Caco-2 (cell line): ENCODE measurements at regions of chr11 and their contacts with region 1.

Region 1: DNA sequence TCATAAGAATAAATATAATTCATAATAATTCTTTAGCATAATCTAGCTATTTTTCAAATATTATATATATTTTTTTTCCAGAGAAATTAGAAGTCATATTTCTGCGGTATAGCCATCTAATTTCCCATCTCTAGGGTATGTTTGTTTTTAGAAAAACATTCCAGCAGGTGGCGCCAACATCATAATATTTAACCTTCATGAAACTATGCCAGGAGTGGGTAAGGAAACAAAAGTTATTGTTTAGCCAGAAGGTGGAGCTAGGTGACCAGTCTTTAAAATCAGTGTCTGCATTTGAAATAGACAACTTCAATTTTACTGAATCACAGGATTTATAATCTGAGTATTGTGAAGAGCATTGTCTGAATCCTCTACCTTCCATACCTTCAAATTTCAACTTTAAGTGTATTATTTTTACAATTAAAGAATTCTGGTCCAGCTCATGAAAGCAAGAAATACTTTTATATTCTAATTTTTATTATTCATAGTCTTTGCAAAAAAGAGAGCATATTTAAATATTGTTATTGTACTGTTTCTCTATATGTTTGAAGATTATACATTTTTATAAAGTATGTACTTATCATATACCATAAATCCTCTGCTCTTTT is 15.7 kb upstream of the CCDC179 start:
- DNase-seq: peak; percentile 60 to 75
- H3K4me3 ChIP-seq: no peak overlapping the region
- H3K4me3 Mint-ChIP-seq: no peak overlapping the region
- H3K27ac Mint-ChIP-seq: no peak overlapping the region
- H3K4me1 ChIP-seq: no peaks in the 10 kb centered on the region
- H3K4me1 Mint-ChIP-seq: peaks cover 6% of the 10 kb centered on the region
- H3K27me3 ChIP-seq: no peaks in the 10 kb centered on the region
- H3K27me3 Mint-ChIP-seq: no peaks in the 10 kb centered on the region
- CTCF ChIP-seq: peak; percentile 62 to 83

Region 2: DNA sequence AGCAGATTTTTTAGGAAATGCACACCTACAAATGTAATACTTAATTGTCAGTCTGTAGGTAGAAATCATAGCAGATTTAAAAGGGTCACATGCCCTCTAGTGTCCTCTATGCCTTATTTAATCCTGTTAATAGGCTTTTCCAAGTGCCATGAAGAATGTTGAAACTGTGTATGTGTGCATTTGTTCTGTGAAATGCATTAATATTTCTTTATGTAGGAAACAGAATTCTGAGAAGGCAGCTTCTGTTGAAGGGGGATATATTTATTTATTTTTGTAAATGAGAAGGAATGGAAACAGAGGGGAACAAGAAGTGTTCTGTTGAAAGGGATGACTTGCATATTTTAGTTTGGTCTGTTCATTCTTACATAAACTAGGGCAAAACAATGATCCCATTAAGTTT is 97.3 kb before region 1 on chr11:
- CTCF ChIA-PET with region 1: no interaction called
- POLR2A ChIA-PET with region 1: no interaction called
- intact Hi-C with region 1: no loop called
- DNase-seq: no peak
- H3K4me3 ChIP-seq: no peak overlapping the region
- H3K4me3 Mint-ChIP-seq: no peak overlapping the region
- H3K27ac Mint-ChIP-seq: no peak overlapping the region
- H3K4me1 ChIP-seq: no peaks in the 10 kb centered on the region
- H3K4me1 Mint-ChIP-seq: no peaks in the 10 kb centered on the region
- H3K27me3 ChIP-seq: no peaks in the 10 kb centered on the region
- H3K27me3 Mint-ChIP-seq: peaks cover 5% of the 10 kb centered on the region
- CTCF ChIP-seq: no peak

Region 3: DNA sequence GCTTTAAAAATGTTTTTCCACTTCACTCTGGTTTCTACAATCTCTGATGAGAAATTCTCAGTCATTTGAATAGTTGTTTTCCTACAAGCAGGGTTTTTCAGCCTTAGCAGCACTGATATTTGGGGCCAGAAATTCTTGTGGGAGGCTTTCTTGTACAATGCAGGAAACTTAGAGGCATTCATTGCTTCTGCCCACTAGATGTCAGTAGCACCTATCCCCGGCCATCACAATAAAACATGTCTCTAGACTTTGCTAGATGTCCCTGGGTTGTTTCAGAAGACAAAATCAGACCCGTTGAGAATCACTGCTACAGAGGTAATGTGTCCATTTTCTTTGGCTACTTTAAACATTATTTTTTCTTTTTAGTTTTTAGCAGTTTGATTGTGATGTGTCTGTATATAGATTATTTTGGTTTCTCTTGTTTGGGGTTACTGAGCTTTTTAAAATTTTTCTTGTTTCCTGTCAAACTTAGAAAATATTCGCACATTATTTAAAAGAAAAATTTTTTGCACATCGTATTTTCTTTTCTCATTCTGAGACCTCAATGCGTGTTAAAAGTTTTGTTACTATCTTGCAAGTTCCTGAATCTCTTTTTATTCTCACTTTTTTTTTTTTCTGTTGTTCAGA is 45.1 kb after region 1 on chr11:
- CTCF ChIA-PET with region 1: no interaction called
- POLR2A ChIA-PET with region 1: no interaction called
- intact Hi-C with region 1: loop called (anchors 1 kb)
- DNase-seq: peak; percentile 49 to 50
- H3K4me3 ChIP-seq: no peak overlapping the region
- H3K4me3 Mint-ChIP-seq: no peak overlapping the region
- H3K27ac Mint-ChIP-seq: no peak overlapping the region
- H3K4me1 ChIP-seq: peaks cover 20% of the 10 kb centered on the region
- H3K4me1 Mint-ChIP-seq: peaks cover 17% of the 10 kb centered on the region
- H3K27me3 ChIP-seq: no peaks in the 10 kb centered on the region
- H3K27me3 Mint-ChIP-seq: no peaks in the 10 kb centered on the region
- CTCF ChIP-seq: peak; percentile 56 to 85

Region 4: DNA sequence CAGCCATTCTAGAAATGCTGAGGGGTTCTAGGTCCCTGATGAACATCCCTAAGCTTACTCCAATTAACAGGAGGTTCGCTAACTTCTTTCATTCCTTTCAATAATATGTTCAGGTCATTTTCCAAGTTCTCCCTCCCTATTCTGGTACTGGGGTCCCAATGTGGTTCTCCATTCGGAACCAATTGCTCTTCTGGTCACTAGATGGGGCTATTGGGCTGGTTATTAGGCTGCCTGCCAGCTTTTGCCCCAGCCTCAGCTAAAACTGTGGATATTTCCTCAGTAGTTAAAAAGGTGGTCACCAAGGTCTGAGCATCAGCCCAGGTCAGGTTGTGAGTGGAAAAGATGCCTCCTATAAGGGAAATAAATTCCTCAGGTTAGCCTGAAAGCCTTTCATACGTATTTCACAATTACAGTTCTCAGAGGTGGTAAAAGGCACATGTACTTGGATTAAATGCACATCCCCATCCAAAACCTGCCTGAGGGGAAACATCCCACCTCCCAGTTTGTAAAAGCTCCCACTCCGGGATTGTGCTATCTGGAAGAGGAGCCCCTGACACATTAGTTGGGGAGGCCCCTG is 145.4 kb after region 1 on chr11:
- CTCF ChIA-PET with region 1: interaction called, 4 read pairs
- POLR2A ChIA-PET with region 1: no interaction called
- intact Hi-C with region 1: loop called (anchors 1 kb)
- DNase-seq: peak in 1 of 2 experiments; percentile 42
- H3K4me3 ChIP-seq: no peak overlapping the region
- H3K4me3 Mint-ChIP-seq: no peak overlapping the region
- H3K27ac Mint-ChIP-seq: no peak overlapping the region
- H3K4me1 ChIP-seq: no peaks in the 10 kb centered on the region
- H3K4me1 Mint-ChIP-seq: no peaks in the 10 kb centered on the region
- H3K27me3 ChIP-seq: no peaks in the 10 kb centered on the region
- H3K27me3 Mint-ChIP-seq: no peaks in the 10 kb centered on the region
- CTCF ChIP-seq: peak; percentile 74 to 85

Region 5: GRCh38 chr11:23087407-23087806 is 211.4 kb after region 1 on chr11:
- CTCF ChIA-PET with region 1: no interaction called
- POLR2A ChIA-PET with region 1: no interaction called
- intact Hi-C with region 1: no loop called
- DNase-seq: no peak
- H3K4me3 ChIP-seq: no peak overlapping the region
- H3K4me3 Mint-ChIP-seq: no peak overlapping the region
- H3K27ac Mint-ChIP-seq: no peak overlapping the region
- H3K4me1 ChIP-seq: no peaks in the 10 kb centered on the region
- H3K4me1 Mint-ChIP-seq: no peaks in the 10 kb centered on the region
- H3K27me3 ChIP-seq: no peaks in the 10 kb centered on the region
- H3K27me3 Mint-ChIP-seq: peaks cover 3% of the 10 kb centered on the region
- CTCF ChIP-seq: no peak

Region 6: DNA sequence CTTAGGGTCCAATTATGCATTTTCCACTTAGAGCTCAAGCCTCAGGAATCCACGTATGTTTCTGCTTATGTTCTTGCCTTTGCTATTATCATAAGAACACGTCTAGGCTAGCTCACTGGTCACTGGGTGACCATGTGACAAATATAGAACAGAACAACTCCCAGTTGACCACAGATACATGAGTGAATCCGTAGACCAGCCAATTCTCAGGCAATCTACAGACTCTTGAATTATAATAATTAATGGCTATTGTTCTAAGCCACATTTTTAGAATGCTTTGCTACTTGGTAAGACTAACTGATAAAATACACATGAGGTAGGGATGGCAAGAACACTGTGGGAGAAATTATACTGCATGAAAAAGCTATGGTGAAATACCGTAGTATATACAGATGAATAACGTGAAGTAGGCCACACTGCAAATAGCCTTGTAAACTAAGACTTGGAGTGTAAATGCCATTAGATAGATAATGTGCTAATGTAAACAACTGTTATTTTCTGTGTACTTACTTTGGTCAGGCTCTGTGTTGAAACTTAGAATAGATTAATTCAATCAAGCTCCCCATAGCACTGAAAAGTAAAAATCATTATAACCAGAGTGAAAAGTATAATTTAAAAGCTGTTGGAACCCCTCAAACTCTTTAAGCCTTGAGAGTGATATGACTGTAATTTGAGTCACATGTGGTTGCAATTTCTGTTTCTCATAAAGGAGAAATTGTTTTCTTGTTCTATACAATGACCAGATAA is 350.5 kb after region 1 on chr11:
- CTCF ChIA-PET with region 1: no interaction called
- POLR2A ChIA-PET with region 1: no interaction called
- intact Hi-C with region 1: loop called (anchors 10 kb)
- DNase-seq: no peak
- H3K4me3 ChIP-seq: no peak overlapping the region
- H3K4me3 Mint-ChIP-seq: no peak overlapping the region
- H3K27ac Mint-ChIP-seq: no peak overlapping the region
- H3K4me1 ChIP-seq: no peaks in the 10 kb centered on the region
- H3K4me1 Mint-ChIP-seq: no peaks in the 10 kb centered on the region
- H3K27me3 ChIP-seq: no peaks in the 10 kb centered on the region
- H3K27me3 Mint-ChIP-seq: no peaks in the 10 kb centered on the region
- CTCF ChIP-seq: no peak